Activated CD8-positive, alpha-beta memory T cell treated with anti-CD3 and anti-CD28 coated beads, Interleukin-2, amount 10 ng/mL, durations not matched to agents 7 days and 5 days (primary cell): ENCODE measurements at regions of chr19 and their contacts with region 1.

Region 1: DNA sequence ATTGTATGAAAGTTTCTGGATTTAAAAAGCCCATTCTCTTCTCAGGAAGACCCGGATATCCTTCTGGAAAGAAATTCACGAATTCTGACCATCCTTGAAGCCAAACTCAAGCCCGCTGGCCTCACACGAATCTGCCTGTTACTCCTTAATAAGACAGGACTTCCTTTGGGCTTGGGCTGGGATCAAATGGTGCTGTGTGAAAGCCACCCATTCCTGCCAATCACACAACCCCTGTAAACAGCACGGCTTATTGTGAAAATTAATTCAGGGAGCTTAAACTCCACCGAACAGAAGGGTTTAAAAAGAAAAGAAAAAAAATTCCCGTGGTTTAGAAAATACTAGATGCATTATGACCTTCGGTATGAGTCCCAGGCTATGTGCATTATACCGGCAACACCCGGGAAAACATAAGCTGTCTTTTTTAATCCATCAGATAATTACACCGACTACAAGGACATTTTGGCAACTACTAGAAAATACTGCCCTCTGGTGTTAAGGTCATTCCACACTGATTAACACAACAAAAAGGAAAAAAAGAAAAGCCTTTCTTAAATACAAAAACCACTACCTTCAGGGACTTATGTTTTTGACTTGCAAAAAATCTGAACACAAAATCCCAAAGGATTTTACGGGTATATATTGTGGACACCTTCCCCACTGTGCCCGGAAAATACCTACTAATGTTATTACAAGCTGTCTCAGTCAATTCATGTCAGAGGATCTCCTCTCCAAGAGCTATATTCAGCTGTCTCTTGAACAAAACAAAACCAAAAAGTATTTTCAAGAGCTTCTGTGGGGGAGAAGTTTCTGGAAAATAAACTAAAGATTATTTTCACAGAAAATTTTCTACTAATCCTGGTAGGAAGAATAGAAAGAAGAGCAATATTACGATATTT is 76.0 kb upstream of the LSM14A start:
- DNase-seq: no peak
- ATAC-seq: no peak
- H3K4me3 Mint-ChIP-seq: no peak overlapping the region
- H3K27ac Mint-ChIP-seq: no peak overlapping the region
- H3K4me1 Mint-ChIP-seq: no peaks in the 10 kb centered on the region
- H3K27me3 Mint-ChIP-seq: peaks cover 23% of the 10 kb centered on the region

Region 2: DNA sequence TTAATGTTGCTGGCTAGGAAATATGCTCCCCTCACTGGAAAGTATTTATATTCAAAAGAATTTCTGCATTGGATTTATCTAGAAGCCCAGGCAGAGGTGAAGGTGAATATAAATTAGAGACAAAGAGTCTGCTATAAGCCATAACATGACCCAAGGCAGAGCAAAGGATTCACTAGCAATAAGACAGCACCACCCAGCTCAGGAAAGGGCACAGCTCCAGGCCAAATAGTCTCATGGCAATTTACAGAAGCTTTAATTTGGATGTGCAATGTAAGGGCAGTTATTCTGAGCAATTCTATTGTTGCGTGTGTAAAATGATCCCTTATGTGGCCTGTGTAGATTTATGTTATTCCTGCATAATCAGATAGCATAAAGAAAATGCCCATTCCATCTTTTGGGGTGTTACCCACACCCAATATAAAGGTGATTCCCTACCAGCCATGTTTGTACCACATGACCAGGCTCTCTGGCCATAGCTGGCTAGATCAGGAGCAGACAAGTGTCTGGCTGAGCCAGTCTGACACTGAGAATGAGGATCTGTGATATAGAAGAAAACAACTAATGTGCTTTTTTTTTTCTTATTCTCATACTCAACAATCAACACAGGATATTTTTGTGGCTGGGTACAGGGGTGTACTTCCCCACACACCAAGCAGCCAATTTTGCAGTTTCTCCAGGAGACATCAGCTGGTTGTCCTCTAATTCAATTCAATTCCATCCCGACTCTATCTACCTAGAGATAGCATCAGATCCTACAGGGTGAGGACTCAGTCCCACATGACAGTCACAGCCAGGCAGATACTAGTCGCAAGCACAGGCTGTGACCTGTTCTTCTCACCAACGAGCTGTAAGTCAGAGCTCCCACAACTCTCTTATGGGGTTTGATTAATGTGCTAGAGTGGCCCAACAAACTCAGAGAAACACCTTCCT is 118.2 kb before region 1 on chr19:
- CTCF ChIA-PET with region 1: no interaction called
- DNase-seq: no peak
- ATAC-seq: no peak
- H3K4me3 Mint-ChIP-seq: no peak overlapping the region
- H3K27ac Mint-ChIP-seq: no peak overlapping the region
- H3K4me1 Mint-ChIP-seq: no peaks in the 10 kb centered on the region
- H3K27me3 Mint-ChIP-seq: peaks cover 3% of the 10 kb centered on the region

Region 3: DNA sequence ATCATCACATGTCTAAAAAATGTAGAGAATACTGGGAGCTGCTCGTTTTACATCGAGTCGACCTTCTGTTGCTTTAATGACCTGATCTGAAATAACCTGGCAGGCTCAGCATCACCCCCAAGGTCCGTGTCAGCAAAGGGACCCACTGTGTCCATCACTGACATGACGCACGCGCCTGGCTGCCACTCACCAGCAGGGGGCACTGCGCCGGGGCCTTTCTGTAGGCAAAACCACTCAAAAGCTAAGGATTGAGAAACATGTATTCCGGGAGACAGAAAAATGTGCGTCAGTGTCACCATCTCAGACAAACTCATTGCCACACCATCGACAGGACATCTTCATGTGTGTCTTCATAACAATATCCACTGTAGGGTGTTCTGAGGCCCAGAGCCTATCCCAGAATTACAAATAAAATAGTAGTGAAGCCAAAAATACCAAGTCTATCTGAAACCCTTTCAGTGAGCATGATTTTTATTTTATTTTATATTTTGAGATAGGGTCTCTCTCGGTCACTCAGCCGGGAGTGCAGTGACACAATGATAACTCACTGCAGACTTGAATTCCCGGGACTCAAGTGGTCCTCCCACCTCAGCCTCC is 54.2 kb before region 1 on chr19:
- CTCF ChIA-PET with region 1: interaction called, 10 read pairs
- DNase-seq: peak; percentile 74
- ATAC-seq: no peak
- H3K4me3 Mint-ChIP-seq: no peak overlapping the region
- H3K27ac Mint-ChIP-seq: no peak overlapping the region
- H3K4me1 Mint-ChIP-seq: no peaks in the 10 kb centered on the region
- H3K27me3 Mint-ChIP-seq: peaks cover 7% of the 10 kb centered on the region

Region 4: GRCh38 chr19:34120846-34121639 is 24.8 kb after region 1 on chr19:
- CTCF ChIA-PET with region 1: interaction called, 10 read pairs
- DNase-seq: peak; percentile 70
- ATAC-seq: peak; percentile 63
- H3K4me3 Mint-ChIP-seq: no peak overlapping the region
- H3K27ac Mint-ChIP-seq: no peak overlapping the region
- H3K4me1 Mint-ChIP-seq: peaks cover 6% of the 10 kb centered on the region
- H3K27me3 Mint-ChIP-seq: peaks cover 13% of the 10 kb centered on the region

Region 5: DNA sequence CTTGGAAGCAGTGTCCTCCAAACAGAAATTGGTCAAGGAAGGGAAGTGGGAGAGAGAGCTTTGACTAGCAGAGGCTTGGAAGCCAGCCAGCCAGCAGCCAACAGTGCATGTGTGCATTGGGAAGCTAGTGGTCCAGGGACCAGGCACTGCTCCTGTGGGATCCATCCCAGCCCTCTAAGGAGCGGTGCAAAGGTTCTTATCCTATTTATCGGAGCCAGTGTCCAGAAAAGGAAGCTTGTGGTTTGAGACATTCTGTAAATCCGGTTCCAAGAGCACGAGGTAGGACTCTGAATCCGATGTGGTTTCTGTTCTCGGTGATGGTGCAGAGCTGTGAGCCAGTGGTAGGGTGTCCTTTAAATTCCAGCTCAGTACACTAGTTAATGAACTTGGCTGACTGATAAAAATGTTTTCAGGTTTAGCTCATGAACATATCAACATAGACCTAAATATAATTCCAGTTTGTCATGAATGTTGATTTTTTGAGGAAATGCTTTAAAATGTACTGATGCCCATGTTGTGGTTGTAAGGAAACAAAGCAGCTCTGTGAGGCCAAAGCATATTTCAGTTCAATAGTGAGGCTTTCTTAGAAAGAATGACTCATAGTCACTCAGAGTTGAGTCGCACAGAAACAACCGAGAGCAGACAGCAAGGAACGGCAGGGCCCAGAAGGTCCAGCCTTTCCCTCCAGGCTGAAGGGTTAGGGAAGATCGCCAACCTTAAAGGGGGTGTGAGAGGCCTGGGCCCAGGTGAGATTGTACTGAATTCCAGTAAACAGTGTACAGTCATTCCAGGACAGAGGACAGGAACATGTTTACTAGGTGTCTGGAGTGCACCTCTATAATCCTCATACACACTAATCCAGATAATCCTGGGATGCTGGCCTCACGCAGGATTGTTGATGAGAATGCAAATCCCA is 136.6 kb after region 1 on chr19:
- CTCF ChIA-PET with region 1: no interaction called
- DNase-seq: peak; percentile 60
- ATAC-seq: peak; percentile 90
- H3K4me3 Mint-ChIP-seq: peak overlapping the region; percentile 52
- H3K27ac Mint-ChIP-seq: peak overlapping the region; percentile 73
- H3K4me1 Mint-ChIP-seq: peaks cover 42% of the 10 kb centered on the region
- H3K27me3 Mint-ChIP-seq: no peaks in the 10 kb centered on the region